SK-N-SH (cell line): ENCODE measurements at regions of chr1 and their contacts with region 1.

Region 1: DNA sequence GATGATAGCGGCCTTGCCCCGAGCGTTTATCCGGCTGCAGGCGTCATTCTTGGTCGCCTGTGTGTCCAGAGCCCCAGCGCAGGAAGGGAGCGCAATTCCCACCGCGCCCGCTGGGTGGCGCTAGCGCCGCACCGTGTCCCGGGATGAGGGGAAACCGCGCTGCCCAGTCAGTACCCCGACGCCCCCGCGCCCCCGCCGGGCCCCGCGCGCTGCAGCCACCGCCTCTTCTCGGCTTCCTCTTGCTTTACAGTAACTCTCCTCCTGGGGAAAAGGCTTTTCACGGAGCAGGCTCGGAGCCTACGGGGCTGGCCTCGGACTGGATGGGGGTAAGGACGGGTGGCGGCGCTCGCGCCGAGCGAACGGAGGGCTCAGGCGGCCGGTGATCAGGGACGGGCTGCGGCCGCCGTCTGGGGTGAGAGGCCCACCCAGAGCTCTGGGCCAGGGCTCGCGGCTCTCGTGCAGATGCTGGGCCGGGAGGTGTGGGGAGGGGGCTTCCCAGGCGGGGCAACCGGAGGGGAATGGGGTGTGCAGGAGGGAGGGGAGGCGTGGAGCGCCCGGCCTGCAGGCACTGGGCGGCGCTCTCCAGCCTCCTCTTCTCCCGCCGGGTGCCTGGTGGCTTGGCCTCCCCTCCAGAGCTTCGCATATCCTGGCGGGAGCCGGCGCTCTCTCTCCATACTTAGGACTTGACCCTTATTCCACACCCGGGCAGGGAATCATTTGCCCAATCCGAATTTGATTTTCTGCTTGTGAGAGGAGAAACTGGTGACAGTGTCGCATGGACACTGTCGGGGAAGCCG is 29.8 kb downstream of the TEX35 start:
- DNase-seq: peak; percentile 94
- H3K4me3 ChIP-seq: peak overlapping the region; percentile 83 to 96
- H3K27ac ChIP-seq: peak overlapping the region; percentile 78 to 90
- H3K4me1 ChIP-seq: peaks cover 26 to 31% of the 10 kb centered on the region in 2 experiments
- H3K27me3 ChIP-seq: no peaks in the 10 kb centered on the region
- CTCF ChIP-seq: peak; percentile 81
- EP300 ChIP-seq: 0 out of 4 replicates have a peak, but pooled peaks of 1 of the 2 experiments have one; percentile 13
- RAD21 ChIP-seq: peak; percentile 77

Region 2: DNA sequence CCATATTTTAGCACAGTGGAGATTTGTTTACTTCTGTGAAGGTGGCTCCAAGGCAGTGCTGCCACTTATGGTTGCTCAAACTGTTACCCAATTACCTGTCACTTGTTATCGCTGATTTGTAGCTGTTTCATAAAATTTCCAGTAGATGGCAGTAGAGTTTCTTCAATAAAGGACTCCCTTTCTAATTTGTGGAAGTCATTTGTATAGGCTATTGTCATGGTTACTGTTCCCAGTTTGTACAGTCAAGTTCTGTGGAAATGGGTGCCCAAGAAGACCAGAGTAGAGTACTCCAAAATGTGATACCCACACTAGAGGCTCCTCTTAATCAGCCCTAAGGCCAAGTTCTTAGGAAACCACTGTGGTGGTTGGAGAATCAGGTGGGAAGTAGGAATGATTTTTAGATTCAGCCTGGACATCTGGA is 232.1 kb before region 1 on chr1:
- CTCF ChIA-PET with region 1: interaction called, 13 read pairs
- POLR2A ChIA-PET with region 1: no interaction called
- DNase-seq: peak; percentile 50
- H3K4me3 ChIP-seq: no peak overlapping the region
- H3K27ac ChIP-seq: no peak overlapping the region
- H3K4me1 ChIP-seq: no peaks in the 10 kb centered on the region; a peak in 1 of 4 replicates
- H3K27me3 ChIP-seq: no peaks in the 10 kb centered on the region
- CTCF ChIP-seq: peak; percentile 85
- EP300 ChIP-seq: no peak
- RAD21 ChIP-seq: peak; percentile 85

Region 3: GRCh38 chr1:178330153-178330552 is 212.6 kb before region 1 on chr1:
- CTCF ChIA-PET with region 1: no interaction called
- POLR2A ChIA-PET with region 1: no interaction called
- DNase-seq: no peak
- H3K4me3 ChIP-seq: no peak overlapping the region
- H3K27ac ChIP-seq: 0 out of 4 replicates have a peak overlapping the region, but pooled peaks of 1 of the 2 experiments have one; percentile 21
- H3K4me1 ChIP-seq: no peaks in the 10 kb centered on the region; a peak in 1 of 4 replicates
- H3K27me3 ChIP-seq: no peaks in the 10 kb centered on the region
- CTCF ChIP-seq: no peak
- EP300 ChIP-seq: no peak
- RAD21 ChIP-seq: no peak

Region 4: DNA sequence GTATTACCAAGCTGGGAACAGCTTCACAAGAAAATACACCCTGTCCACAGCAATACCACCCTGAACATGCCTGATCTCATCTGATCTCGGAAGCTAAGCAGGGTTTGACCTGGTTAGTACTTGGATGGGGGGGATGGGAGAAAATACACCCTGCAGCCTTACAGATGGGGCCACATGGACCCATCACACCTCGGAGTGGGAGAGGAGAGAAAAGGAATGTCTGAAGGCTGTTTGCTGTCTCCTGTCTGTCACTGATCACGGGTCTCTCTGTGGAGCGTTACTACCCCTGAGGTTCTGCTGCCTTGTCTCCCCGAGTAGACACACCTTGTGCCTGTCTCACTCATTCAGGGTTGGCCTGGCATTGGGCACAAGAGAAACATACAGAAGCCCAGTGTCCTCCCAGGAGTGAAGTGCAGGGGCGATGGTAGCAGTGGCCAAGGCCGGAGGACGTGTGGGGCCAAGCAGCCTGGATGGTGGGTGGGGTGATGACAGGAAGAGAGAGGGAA is 18.2 kb after region 1 on chr1:
- CTCF ChIA-PET with region 1: interaction called, 22 read pairs
- POLR2A ChIA-PET with region 1: no interaction called
- DNase-seq: no peak
- H3K4me3 ChIP-seq: no peak overlapping the region
- H3K27ac ChIP-seq: no peak overlapping the region
- H3K4me1 ChIP-seq: no peaks in the 10 kb centered on the region; a peak in 2 of 4 replicates
- H3K27me3 ChIP-seq: no peaks in the 10 kb centered on the region
- CTCF ChIP-seq: no peak
- EP300 ChIP-seq: no peak
- RAD21 ChIP-seq: no peak

Region 5: DNA sequence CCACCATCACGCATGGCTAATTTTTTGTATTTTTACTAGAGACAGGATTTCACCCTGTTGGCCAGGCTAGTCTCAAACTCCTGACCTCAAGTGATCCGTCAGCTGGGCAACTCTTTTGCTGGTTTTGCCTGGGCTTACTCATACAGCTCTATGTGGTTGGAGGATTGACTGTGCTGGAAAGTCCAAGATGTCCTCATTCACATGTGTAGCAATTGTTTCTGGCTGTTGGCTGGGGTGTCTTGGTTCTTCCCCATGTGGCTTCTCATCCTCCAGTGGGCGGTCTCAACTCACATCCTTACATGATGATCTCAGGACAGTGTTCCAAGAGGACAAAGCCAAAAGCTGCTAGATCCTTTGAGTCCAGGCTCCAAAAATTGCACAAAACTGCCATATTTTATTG is 23.4 kb after region 1 on chr1:
- CTCF ChIA-PET with region 1: interaction called, 22 read pairs
- POLR2A ChIA-PET with region 1: no interaction called
- DNase-seq: no peak
- H3K4me3 ChIP-seq: no peak overlapping the region
- H3K27ac ChIP-seq: no peak overlapping the region
- H3K4me1 ChIP-seq: no peaks in the 10 kb centered on the region; a peak in 1 of 4 replicates
- H3K27me3 ChIP-seq: no peaks in the 10 kb centered on the region
- CTCF ChIP-seq: no peak
- EP300 ChIP-seq: no peak
- RAD21 ChIP-seq: no peak

Region 6: GRCh38 chr1:178725603-178726517 is 183.1 kb after region 1 on chr1:
- CTCF ChIA-PET with region 1: interaction called, 13 read pairs
- POLR2A ChIA-PET with region 1: interaction called, 14 read pairs
- DNase-seq: peak; percentile 79
- H3K4me3 ChIP-seq: peak overlapping the region; percentile 89 to 96
- H3K27ac ChIP-seq: peak overlapping the region; percentile 68 to 87
- H3K4me1 ChIP-seq: peaks cover 0 to 13% of the 10 kb centered on the region in 2 experiments; a peak in 3 of 4 replicates
- H3K27me3 ChIP-seq: no peaks in the 10 kb centered on the region
- CTCF ChIP-seq: 0 out of 2 replicates have a peak, but pooled peaks have one; percentile 18
- EP300 ChIP-seq: no peak
- RAD21 ChIP-seq: no peak

Region 7: GRCh38 chr1:178749581-178750166 is 206.9 kb after region 1 on chr1:
- CTCF ChIA-PET with region 1: interaction called, 243 read pairs
- POLR2A ChIA-PET with region 1: interaction called, 3 read pairs
- DNase-seq: no peak
- H3K4me3 ChIP-seq: no peak overlapping the region
- H3K27ac ChIP-seq: no peak overlapping the region
- H3K4me1 ChIP-seq: no peaks in the 10 kb centered on the region; a peak in 1 of 4 replicates
- H3K27me3 ChIP-seq: no peaks in the 10 kb centered on the region
- CTCF ChIP-seq: no peak
- EP300 ChIP-seq: no peak
- RAD21 ChIP-seq: no peak

Region 8: DNA sequence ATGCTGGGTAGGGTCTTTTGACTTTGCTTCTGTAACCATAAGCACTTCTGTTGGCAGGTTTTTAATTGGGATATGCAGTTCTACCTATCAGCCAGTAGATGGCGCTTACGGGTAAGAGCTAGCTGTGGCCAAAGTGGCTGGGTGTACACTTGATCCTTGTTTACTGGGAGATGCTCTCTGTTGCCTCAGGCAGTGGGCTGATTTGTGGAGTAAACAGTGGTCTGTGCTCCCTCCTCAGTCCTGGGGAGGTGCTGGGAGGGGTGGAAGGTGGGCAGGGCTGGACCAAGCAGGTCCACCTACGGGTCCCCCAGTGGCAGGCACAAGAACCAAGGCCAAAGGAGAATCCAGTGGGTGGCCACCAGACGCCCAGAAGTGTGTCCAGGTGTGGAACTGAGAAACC is 225.7 kb after region 1 on chr1:
- CTCF ChIA-PET with region 1: interaction called, 16 read pairs
- POLR2A ChIA-PET with region 1: no interaction called
- DNase-seq: peak; percentile 16
- H3K4me3 ChIP-seq: no peak overlapping the region
- H3K27ac ChIP-seq: no peak overlapping the region
- H3K4me1 ChIP-seq: no peaks in the 10 kb centered on the region
- H3K27me3 ChIP-seq: no peaks in the 10 kb centered on the region
- CTCF ChIP-seq: peak; percentile 61
- EP300 ChIP-seq: no peak
- RAD21 ChIP-seq: peak; percentile 40